ENCODE measurements at regions of chr20 and their contacts with region 1.

Region 1: DNA sequence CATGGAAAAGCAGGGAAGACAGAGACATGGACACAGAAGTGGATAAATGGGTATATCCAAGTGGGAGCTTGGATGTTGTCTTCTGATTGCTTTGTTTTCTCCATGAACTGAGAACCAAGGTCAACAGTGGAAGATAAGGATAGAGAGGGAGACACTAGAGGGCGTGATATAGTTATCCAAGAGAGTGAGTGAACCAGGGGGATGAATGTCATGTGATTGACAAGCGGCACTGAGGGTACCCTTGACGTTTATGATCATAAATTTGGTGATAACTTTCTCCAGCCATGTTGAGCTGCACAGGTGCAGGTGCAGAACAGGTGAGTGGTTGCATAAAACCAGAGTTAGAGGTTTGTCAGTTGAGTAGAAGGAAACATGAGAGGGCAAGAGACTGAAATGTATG is 20.7 kb downstream of the EBF4 start:
- DNase-seq: no peak
- ATAC-seq: peak; percentile 68; the same call in 1 of the 2 replicates
- H3K4me3 ChIP-seq: no peak overlapping the region
- H3K27ac ChIP-seq: no peak overlapping the region
- H3K4me1 ChIP-seq: no peaks in the 10 kb centered on the region
- H3K27me3 ChIP-seq: peaks cover 3% of the 10 kb centered on the region; the same call in 1 of the 2 replicates
- CTCF ChIP-seq: no peak; the same call in 1 of the 2 replicates

Region 2: GRCh38 chr20:2544211-2544610 is 169.1 kb before region 1 on chr20:
- CTCF ChIA-PET with region 1: no interaction called
- POLR2A ChIA-PET with region 1: no interaction called
- in situ Hi-C with region 1: no loop called
- intact Hi-C with region 1: no loop called
- DNase-seq: no peak
- ATAC-seq: no peak
- H3K4me3 ChIP-seq: no peak overlapping the region
- H3K27ac ChIP-seq: no peak overlapping the region
- H3K4me1 ChIP-seq: no peaks in the 10 kb centered on the region
- H3K27me3 ChIP-seq: peaks cover 18% of the 10 kb centered on the region
- CTCF ChIP-seq: no peak

Region 3: GRCh38 chr20:2756056-2756611 is 42.8 kb after region 1 on chr20:
- CTCF ChIA-PET with region 1: no interaction called
- POLR2A ChIA-PET with region 1: interaction called, 10 read pairs
- in situ Hi-C with region 1: no loop called
- intact Hi-C with region 1: no loop called
- DNase-seq: no peak
- ATAC-seq: 0 out of 2 replicates have a peak, but pooled peaks have one; percentile 37
- H3K4me3 ChIP-seq: no peak overlapping the region
- H3K27ac ChIP-seq: no peak overlapping the region
- H3K4me1 ChIP-seq: peaks cover 6% of the 10 kb centered on the region
- H3K27me3 ChIP-seq: no peaks in the 10 kb centered on the region
- CTCF ChIP-seq: peak; percentile 78

Region 4: GRCh38 chr20:2859330-2860121 is 146.2 kb after region 1 on chr20:
- CTCF ChIA-PET with region 1: no interaction called
- POLR2A ChIA-PET with region 1: interaction called, 12 read pairs
- in situ Hi-C with region 1: no loop called
- intact Hi-C with region 1: no loop called
- DNase-seq: no peak
- ATAC-seq: no peak
- H3K4me3 ChIP-seq: no peak overlapping the region
- H3K27ac ChIP-seq: no peak overlapping the region
- H3K4me1 ChIP-seq: no peaks in the 10 kb centered on the region
- H3K27me3 ChIP-seq: no peaks in the 10 kb centered on the region
- CTCF ChIP-seq: no peak